ENCODE measurements at regions of chr3 and their contacts with region 1.

Region 1: GRCh38 chr3:128497387-128498126 is 4.6 kb upstream of the GATA2 start:
- DNase-seq: no peak

Region 2: GRCh38 chr3:128095222-128095703 is 402.3 kb before region 1 on chr3:
- intact Hi-C with region 1: loop called (anchors 5 kb)
- DNase-seq: peak; percentile 87

Region 3: GRCh38 chr3:128170805-128171516 is 326.6 kb before region 1 on chr3:
- intact Hi-C with region 1: loop called (anchors 2 kb)
- DNase-seq: no peak

Region 4: GRCh38 chr3:128226795-128227395 is 270.7 kb before region 1 on chr3:
- intact Hi-C with region 1: loop called (anchors 5 kb)
- DNase-seq: no peak

Region 5: GRCh38 chr3:128360705-128361271 is 136.8 kb before region 1 on chr3:
- intact Hi-C with region 1: no loop called
- DNase-seq: no peak

Region 6: DNA sequence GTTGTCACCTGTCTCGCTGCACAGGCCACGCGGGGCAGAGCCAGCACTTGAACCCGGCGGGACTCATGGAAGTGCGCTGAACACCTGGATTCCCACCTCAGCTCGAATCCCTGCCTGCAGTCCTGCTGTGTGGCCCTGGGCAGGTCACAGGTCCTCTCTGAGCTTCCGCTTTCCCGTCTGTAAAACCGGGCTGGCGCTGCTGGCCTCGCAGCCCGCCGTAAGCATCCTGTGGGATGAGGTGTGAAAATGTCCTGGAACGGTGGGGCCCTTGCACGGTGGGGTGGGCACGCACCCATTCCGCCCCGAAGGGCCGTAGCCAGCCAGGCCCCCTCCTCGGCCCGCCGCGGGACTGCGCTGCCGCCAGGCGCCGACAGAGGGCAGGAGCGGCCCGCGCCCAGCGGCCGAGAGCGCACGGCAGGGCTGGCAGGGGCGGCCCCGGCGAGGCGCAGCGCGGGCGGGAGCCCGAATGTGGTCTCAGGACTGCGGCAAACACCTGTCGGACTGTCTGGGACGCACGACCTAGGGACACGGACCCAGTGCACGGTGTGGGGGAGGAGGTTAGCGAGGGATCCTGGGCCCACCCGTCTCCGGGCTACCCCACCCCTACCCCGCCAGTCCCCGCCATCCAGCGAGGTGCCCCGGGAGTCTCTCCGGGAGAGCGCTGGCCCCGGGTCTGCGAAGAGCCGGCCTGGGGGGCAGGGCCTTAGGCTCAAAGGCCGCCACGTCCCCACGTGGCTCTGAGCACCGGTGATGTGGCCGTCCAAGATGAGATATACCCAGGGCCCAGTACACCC is 71.2 kb before region 1 on chr3:
- intact Hi-C with region 1: loop called (anchors 2 kb)
- DNase-seq: peak; percentile 82

Region 7: GRCh38 chr3:128584412-128585020 is 87.0 kb after region 1 on chr3:
- intact Hi-C with region 1: loop called (anchors 5 kb)
- DNase-seq: no peak